Astrocyte of the cerebellum (primary cell): ENCODE measurements at regions of chr2 and their contacts with region 1.

Region 1: DNA sequence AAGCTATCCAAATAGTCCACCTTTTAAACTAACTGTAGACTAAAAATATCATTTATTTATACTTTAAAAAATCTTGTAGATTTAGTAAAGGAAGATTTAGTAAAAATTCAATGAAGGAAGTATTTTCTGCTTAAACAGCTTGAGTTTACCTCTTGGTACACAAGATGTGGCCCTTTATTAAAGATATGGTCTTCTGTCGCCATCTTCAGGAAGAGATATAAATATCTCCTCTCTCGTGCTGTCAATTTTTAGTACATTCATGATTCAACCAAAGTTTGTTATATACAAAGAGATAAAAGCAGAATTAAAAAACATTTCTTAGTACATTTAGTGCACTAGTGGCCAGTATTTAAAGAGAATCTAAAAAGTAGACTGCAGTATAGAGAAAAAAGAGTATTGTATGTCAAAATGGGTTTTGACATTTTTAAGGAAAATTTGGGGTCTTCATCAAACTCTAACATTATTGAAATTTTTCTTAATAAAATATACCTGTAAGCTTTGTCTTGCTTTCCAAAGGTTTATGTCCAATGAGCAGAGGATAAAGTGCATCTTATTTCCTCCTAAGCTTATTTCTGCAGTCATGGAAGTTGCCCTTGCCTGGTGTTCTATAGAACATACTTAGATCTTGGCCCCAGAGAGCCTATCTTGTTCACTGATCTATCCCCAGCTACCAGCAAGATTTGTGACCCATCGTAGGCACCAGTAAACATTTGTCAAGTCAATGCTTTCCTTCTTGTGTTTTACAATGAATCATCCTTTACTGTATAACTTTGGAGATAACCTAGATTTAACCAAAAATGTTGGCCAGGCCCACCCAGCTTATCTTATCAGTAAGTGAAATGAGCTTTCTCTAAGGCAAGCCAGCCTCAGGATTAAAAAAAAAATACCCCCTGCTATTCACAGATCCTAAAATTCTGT is 18.5 kb upstream of the EML6 start:
- DNase-seq: peak; percentile 62
- H3K4me3 ChIP-seq: no peak overlapping the region
- CTCF ChIP-seq: peak; percentile 25

Region 2: GRCh38 chr2:54161660-54162424 is 543.1 kb before region 1 on chr2:
- in situ Hi-C with region 1: loop called (anchors 5 kb)
- DNase-seq: no peak
- H3K4me3 ChIP-seq: no peak overlapping the region
- CTCF ChIP-seq: no peak

Region 3: GRCh38 chr2:54522624-54523281 is 182.2 kb before region 1 on chr2:
- in situ Hi-C with region 1: loop called (anchors 10 kb)
- DNase-seq: no peak
- H3K4me3 ChIP-seq: no peak overlapping the region
- CTCF ChIP-seq: peak; percentile 67

Region 4: DNA sequence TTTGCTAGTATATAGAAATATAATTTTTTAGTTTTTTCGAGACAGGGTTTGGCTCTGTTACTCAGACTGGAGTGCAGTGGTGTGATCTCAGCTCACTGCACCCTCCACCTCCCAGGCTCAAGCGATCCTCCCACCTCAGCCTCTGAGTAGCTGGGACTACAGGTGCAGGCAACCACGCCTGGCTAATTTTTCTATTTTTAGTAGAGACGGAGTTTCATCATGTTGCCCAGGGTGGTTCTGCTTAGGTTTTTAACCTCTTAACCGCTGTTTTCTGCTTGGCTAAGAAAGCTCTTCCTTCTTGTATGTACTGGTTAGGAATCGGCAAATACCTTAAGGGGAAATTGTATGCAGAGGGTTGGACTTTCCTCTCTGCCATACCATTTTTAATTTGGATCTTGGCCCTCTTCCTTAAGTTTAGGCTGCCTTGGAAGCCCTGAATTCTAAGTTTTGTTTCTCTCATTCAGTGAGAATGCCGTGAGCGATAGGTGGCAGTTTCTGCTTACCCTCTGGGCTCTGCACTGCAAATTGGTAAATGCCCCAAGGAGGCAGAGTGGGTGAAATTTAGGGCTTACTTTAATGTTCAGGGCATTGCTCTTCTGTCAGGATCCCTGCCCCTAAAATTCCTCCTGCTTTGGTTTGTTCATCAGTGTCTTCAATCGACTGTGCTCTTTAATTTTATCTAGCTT is 50.8 kb after region 1 on chr2:
- in situ Hi-C with region 1: no loop called
- DNase-seq: no peak
- H3K4me3 ChIP-seq: no peak overlapping the region
- CTCF ChIP-seq: no peak